MCF 10A (cell line): ENCODE measurements at regions of chr17 and their contacts with region 1.

Region 1: DNA sequence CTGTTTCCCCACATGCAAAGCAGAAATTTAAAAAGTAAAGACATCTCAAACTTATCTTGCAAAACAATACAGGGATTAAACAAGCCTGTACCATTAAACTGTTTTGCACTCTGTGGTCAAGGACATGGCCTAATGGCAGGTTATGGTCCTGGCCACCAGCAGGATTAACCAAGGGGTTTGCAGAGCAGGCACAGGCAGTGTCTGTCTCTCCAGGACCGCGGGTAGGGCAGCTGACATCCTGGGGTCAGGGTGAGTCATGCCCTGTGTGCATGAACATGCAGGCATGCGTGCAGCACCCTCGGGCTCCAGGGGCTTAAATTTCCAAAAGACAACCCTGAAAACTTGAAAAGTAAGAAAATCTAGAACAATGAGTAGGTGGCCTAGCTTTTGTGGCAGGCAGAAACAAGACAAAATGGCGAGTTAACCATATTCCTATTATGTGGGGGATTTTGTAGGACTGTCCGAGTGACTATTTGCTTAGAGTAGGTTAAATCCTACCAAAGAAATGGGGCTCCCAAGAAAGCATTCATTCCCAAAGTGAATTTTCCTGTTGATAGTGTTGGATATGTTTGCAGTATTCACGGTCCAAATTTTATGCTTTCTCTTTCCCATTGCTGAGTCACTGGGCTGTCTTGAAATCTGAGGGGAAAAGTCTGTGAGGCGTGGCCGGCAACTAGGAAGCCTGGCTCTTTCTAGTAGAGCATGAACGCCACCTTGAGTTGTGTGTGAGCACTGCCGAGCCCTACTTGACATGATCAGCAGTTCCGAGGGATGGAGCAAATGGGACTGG is 158.4 kb upstream of the FAM20A start:
- DNase-seq: peak; percentile 95
- H3K4me3 Mint-ChIP-seq: peak overlapping the region; percentile 79
- H3K27ac Mint-ChIP-seq: peak overlapping the region; percentile 77
- H3K4me1 Mint-ChIP-seq: peaks cover 20% of the 10 kb centered on the region
- H3K27me3 Mint-ChIP-seq: no peaks in the 10 kb centered on the region
- CTCF ChIP-seq: peak; percentile 95

Region 2: GRCh38 chr17:68172461-68172954 is 587.0 kb before region 1 on chr17:
- CTCF ChIA-PET with region 1: interaction called, 3 read pairs
- POLR2A ChIA-PET with region 1: no interaction called
- intact Hi-C with region 1: loop called (anchors 1 kb)
- DNase-seq: peak; percentile 67
- H3K4me3 Mint-ChIP-seq: no peak overlapping the region
- H3K27ac Mint-ChIP-seq: no peak overlapping the region
- H3K4me1 Mint-ChIP-seq: no peaks in the 10 kb centered on the region
- H3K27me3 Mint-ChIP-seq: no peaks in the 10 kb centered on the region
- CTCF ChIP-seq: peak; percentile 98

Region 3: DNA sequence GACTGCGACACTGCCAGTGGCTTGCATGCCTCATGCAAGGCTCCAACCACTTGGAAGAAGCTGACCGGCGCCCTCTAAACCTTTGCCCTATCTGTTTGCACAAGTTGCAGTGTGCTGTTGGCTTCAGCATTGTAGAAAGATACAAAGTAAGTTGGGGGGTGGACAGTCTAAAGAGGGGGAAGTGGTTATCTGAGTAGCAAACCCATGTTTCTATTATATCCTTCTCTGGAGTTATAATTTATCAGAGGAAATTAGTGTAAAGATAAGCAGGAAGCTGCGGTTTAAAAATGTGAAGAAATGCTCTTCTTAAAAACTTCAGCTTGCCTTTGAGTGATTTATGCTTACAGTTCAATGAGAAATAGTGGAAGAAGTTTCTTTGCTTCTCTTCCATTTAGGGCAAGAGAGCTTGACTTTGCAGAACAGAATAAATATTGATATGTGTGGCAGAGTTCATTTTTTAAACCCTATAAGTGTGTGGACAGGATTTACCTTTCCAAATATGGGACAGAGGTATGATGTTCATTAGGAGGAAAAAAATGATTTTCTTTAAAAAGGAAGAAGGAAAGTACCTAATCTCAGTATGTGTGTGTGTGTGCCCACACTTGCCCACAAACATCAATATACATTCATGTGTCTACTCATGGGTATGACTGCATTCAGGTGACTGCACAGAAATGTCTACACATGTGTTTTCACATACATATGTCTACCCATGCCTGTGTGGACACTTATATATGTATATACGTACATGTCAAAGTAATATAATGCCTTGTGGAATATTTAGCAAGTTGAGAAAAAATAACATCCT is 503.6 kb before region 1 on chr17:
- CTCF ChIA-PET with region 1: no interaction called
- POLR2A ChIA-PET with region 1: no interaction called
- intact Hi-C with region 1: loop called (anchors 5 kb)
- DNase-seq: no peak
- H3K4me3 Mint-ChIP-seq: no peak overlapping the region
- H3K27ac Mint-ChIP-seq: no peak overlapping the region
- H3K4me1 Mint-ChIP-seq: no peaks in the 10 kb centered on the region
- H3K27me3 Mint-ChIP-seq: no peaks in the 10 kb centered on the region
- CTCF ChIP-seq: no peak

Region 4: GRCh38 chr17:68512247-68512982 is 247.1 kb before region 1 on chr17 and contains the start of gene PRKAR1A:
- CTCF ChIA-PET with region 1: no interaction called
- POLR2A ChIA-PET with region 1: interaction called, 10 read pairs
- intact Hi-C with region 1: loop called (anchors 5 kb)
- DNase-seq: peak; percentile 91
- H3K4me3 Mint-ChIP-seq: peak within 1 kb of the TSS; percentile 95
- H3K27ac Mint-ChIP-seq: peak within 1 kb of the TSS; percentile 98
- H3K4me1 Mint-ChIP-seq: peaks cover 25% of the 10 kb centered on the region
- H3K27me3 Mint-ChIP-seq: no peaks in the 10 kb centered on the region
- CTCF ChIP-seq: no peak
- total RNA-seq, gene PRKAR1A: 264 and 271 TPM in 2 replicates

Region 5: GRCh38 chr17:68533887-68534694 is 225.4 kb before region 1 on chr17:
- CTCF ChIA-PET with region 1: interaction called, 7 read pairs
- POLR2A ChIA-PET with region 1: interaction called, 4 read pairs
- intact Hi-C with region 1: loop called (anchors 1 kb)
- DNase-seq: no peak
- H3K4me3 Mint-ChIP-seq: no peak overlapping the region
- H3K27ac Mint-ChIP-seq: no peak overlapping the region
- H3K4me1 Mint-ChIP-seq: no peaks in the 10 kb centered on the region
- H3K27me3 Mint-ChIP-seq: no peaks in the 10 kb centered on the region
- CTCF ChIP-seq: peak; percentile 25

Region 6: GRCh38 chr17:68600067-68600930 is 159.2 kb before region 1 on chr17:
- CTCF ChIA-PET with region 1: no interaction called
- POLR2A ChIA-PET with region 1: no interaction called
- intact Hi-C with region 1: loop called (anchors 5 kb)
- DNase-seq: no peak
- H3K4me3 Mint-ChIP-seq: peak overlapping the region; percentile 71
- H3K27ac Mint-ChIP-seq: no peak overlapping the region
- H3K4me1 Mint-ChIP-seq: peaks cover 6% of the 10 kb centered on the region
- H3K27me3 Mint-ChIP-seq: peaks cover 40% of the 10 kb centered on the region
- CTCF ChIP-seq: no peak